ENCODE measurements at regions of chr18 and their contacts with region 1.

Region 1: GRCh38 chr18:76492669-76493212 is 2.3 kb downstream of the ZNF516 start:
- DNase-seq: peak; percentile 100
- ATAC-seq: peak; percentile 89 to 97 (median 94)
- H3K4me3 ChIP-seq: peak overlapping the region; percentile 54 to 94 (median 78)
- H3K27ac ChIP-seq: peak overlapping the region; percentile 9 to 89 (median 82)
- H3K4me1 ChIP-seq: peaks cover 4 to 52% (median 35%) of the 10 kb centered on the region in 9 donors
- H3K27me3 ChIP-seq: no peaks in the 10 kb centered on the region
- CTCF ChIP-seq: no peak

Region 2: DNA sequence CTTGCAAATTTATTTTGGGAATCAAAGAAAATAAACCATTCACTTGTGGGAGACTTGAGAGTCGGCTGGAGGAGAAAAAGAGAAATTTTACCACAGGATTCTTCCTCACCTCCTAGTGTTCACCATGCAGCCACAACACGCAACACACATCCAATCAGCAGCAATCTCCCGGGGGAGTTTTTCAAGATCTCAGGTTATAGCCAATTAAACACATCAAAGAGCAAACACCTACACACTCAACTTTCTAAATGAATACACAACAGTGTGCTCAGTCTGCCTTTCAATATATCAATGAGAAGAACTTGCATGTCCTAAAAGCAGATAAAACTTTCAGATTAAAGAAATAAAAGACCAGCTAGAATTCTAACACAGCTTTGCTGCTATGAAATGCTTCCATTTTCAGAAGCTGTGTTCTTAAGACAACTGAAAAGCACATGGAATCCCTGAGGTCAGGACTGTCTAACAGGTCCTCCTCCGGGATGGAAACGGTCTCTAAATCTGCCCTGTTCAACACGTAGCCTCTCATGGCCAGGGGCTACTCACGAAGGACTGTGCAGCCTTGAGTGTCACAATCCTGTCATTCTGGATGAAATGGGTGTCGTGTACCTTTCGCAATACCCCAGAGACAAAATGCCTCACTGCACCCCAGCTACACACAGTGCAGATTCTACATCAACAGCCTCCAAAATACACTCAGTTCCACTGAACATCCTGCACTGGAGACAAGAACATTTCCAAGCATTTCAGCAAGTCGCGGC is 81.9 kb before region 1 on chr18:
- intact Hi-C with region 1: loop called in 3 of 10 experiments (anchors 5 to 10 kb)
- DNase-seq: no peak
- ATAC-seq: no peak
- H3K4me3 ChIP-seq: no peak overlapping the region
- H3K27ac ChIP-seq: no peak overlapping the region
- H3K4me1 ChIP-seq: peaks cover 0 to 55% (median 35%) of the 10 kb centered on the region in 9 donors
- H3K27me3 ChIP-seq: no peaks in the 10 kb centered on the region
- CTCF ChIP-seq: no peak

Region 3: GRCh38 chr18:76435316-76435989 is 57.3 kb before region 1 on chr18:
- intact Hi-C with region 1: no loop called
- DNase-seq: no peak
- ATAC-seq: no peak
- H3K4me3 ChIP-seq: no peak overlapping the region
- H3K27ac ChIP-seq: no peak overlapping the region
- H3K4me1 ChIP-seq: peaks cover 0 to 22% (median 5%) of the 10 kb centered on the region in 9 donors
- H3K27me3 ChIP-seq: no peaks in the 10 kb centered on the region
- CTCF ChIP-seq: peak in 1 of 9 donors; percentile 14

Region 4: GRCh38 chr18:76450452-76451395 is 42.0 kb before region 1 on chr18:
- intact Hi-C with region 1: loop called in 6 of 10 experiments (anchors 5 kb)
- DNase-seq: peak; percentile 62 to 64
- ATAC-seq: peak; percentile 48 to 85 (median 76)
- H3K4me3 ChIP-seq: peak overlapping the region; percentile 42 to 71 (median 58)
- H3K27ac ChIP-seq: peak overlapping the region; percentile 73 to 90 (median 81)
- H3K4me1 ChIP-seq: peaks cover 2 to 95% (median 69%) of the 10 kb centered on the region in 9 donors
- H3K27me3 ChIP-seq: no peaks in the 10 kb centered on the region
- CTCF ChIP-seq: no peak

Region 5: DNA sequence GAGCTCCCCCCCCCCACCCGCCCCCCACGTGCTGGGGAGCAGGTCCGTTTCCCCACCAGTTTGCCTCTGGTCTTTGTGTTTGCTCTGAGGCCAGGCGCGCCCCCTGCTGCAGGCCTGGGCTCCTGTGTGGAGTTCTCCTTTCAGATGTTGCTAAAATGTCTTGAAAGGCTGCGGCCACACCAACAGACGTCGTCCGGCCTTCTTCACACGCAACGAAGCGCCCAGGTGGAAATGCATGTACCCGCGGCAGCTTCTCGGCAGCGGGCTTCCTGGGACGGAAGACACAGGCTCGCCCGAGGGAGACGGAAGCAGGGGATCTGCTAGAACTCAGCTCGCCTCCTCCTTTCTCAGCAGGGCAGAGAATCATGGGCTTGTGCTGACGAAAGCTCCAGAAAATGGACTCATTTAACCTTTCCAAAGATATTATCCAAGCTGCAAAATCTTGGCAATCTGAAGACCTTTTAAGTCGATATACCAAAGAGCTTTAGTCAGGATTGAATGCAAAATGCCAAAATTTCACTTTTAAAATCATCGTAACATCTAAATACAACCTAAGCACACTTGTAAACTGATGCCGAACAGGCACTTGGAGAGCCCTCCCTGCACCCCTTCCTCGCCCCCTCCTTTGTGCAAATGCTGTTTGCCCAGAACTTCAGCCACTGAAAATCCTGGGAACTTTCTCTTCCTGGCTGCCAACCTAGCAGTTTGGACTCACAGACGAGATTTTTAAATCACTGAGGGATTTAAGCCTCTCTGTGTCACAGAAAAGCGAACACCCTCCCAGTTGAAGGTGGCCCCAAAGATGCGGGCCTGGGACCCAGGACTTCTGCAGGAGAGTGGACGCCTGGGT is 127.8 kb after region 1 on chr18:
- intact Hi-C with region 1: loop called in 1 of 10 experiments (anchors 10 kb)
- DNase-seq: peak; percentile 69
- ATAC-seq: peak; percentile 81 to 91 (median 87)
- H3K4me3 ChIP-seq: peak overlapping the region; percentile 1 to 58 (median 50)
- H3K27ac ChIP-seq: peak overlapping the region in 8 of 10 donors; percentile 2 to 83 (median 64)
- H3K4me1 ChIP-seq: peaks cover 0 to 34% (median 16%) of the 10 kb centered on the region in 9 donors
- H3K27me3 ChIP-seq: peaks cover 0 to 10% (median 0%) of the 10 kb centered on the region in 7 donors
- CTCF ChIP-seq: peak; percentile 25 to 76 (median 68)

Region 6: DNA sequence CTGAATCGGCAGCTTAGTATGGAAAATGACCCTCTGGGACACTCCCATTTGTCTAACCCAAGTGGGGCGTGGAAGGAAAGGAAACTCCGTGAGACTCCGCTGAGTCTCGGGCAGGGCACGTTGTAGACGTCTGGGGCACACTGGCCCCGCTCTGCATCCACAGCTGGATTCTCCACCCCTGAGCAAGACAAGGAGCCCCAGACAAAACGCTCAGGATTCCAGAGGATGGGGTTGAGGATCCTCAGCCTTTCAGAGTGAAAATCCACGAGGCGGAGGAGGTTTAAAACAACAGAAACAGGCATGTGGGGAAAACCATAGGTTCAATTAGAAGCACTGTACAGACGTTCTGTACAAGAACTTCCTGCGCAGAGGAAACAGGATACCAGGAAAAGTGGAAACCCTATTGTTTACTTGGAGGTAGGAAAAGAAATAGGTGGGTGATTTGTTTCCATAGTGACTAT is 204.7 kb after region 1 on chr18:
- intact Hi-C with region 1: loop called in 1 of 10 experiments (anchors 5 kb)
- DNase-seq: no peak
- ATAC-seq: peak; percentile 67 to 93 (median 86)
- H3K4me3 ChIP-seq: peak overlapping the region in 5 of 10 donors; percentile 6 to 28 (median 26)
- H3K27ac ChIP-seq: peak overlapping the region in 8 of 10 donors; percentile 13 to 77 (median 50)
- H3K4me1 ChIP-seq: peaks cover 0 to 15% (median 0%) of the 10 kb centered on the region in 9 donors
- H3K27me3 ChIP-seq: peaks cover 0 to 41% (median 0%) of the 10 kb centered on the region in 7 donors
- CTCF ChIP-seq: no peak

Measured in heart right ventricle (tissue), 16 donors.